PC-3 (cell line): ENCODE measurements at regions of chr3 and their contacts with region 1.

Region 1: DNA sequence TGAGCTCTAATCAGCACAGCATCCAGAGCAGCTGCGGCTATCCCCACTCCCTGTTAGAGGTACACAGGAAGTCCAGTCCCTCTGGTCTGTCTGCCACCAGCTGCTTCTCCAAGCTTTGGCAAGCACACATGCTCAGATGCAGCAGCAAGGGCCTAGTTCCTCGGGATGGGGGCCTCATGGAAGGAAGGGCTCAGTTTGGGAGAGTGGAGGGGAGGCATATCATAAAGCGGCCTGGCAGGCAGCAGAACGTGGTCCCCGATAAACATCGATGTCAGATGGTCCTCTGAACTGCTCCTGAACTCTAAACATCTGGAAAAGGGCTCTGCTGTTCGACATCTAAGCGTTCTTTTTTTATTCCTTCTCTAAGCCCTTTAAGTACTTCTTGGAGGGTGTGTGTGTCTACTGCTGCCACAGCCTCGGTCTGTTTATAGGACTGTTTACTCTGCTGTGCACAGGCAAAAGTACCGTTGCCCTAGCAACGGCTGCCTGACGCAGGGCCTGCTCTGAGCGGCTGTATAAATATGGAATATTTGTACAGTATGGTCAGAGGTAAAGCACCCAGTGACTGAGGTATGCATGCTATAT is 74.6 kb downstream of the PRICKLE2 start:
- DNase-seq: peak; percentile 70
- ATAC-seq: peak; percentile 99
- H3K4me3 ChIP-seq: no peak overlapping the region
- H3K27ac ChIP-seq: peak overlapping the region; percentile 66
- H3K4me1 ChIP-seq: peaks cover 14% of the 10 kb centered on the region
- H3K27me3 ChIP-seq: no peaks in the 10 kb centered on the region
- CTCF ChIP-seq: no peak

Region 2: DNA sequence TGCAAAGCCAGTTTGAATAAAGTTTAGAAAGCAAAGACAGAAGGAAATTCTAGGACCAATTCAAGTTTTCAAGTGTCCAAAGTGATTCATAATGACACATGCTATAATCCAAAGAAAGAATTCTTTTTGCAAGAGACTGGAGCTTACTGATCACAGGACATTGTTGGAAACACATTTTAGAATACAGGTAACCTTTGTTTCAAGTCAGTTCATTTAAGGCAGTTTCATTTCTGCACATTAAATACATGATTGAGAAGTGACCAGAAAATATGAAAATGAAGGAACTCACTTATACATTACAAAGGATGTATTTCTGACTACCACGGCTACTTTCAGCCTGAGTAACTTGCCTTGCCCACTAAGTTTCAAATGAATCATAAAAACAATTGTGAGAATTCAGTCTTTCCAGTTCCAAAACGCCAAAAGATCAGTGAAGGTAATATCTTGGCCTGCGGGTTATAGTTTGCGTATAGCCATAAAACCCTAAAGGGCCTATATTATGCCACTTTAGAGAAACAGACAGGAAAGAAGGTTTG is 25.8 kb after region 1 on chr3:
- CTCF ChIA-PET with region 1: no interaction called
- POLR2A ChIA-PET with region 1: no interaction called
- intact Hi-C with region 1: loop called (anchors 2 kb)
- DNase-seq: peak; percentile 68
- ATAC-seq: peak; percentile 72
- H3K4me3 ChIP-seq: peak overlapping the region; percentile 41; the same call in 1 of the 2 replicates
- H3K27ac ChIP-seq: peak overlapping the region; percentile 92
- H3K4me1 ChIP-seq: peaks cover 36% of the 10 kb centered on the region
- H3K27me3 ChIP-seq: no peaks in the 10 kb centered on the region
- CTCF ChIP-seq: no peak

Region 3: GRCh38 chr3:64392001-64392400 is 241.3 kb after region 1 on chr3:
- CTCF ChIA-PET with region 1: no interaction called
- POLR2A ChIA-PET with region 1: no interaction called
- intact Hi-C with region 1: no loop called
- DNase-seq: no peak
- ATAC-seq: no peak
- H3K4me3 ChIP-seq: no peak overlapping the region
- H3K27ac ChIP-seq: no peak overlapping the region
- H3K4me1 ChIP-seq: no peaks in the 10 kb centered on the region
- H3K27me3 ChIP-seq: no peaks in the 10 kb centered on the region
- CTCF ChIP-seq: no peak